Activated CD4-positive, alpha-beta T cell treated with anti-CD3 and anti-CD28 coated beads for 36 hours (primary cell): ENCODE measurements at regions of chr10 and their contacts with region 1.

Region 1: GRCh38 chr10:88810196-88810961 is 7.8 kb downstream of the LIPM start:
- DNase-seq: peak; percentile 40
- ATAC-seq: peak; percentile 86
- H3K4me3 Mint-ChIP-seq: no peak overlapping the region
- H3K27ac Mint-ChIP-seq: no peak overlapping the region
- H3K4me1 Mint-ChIP-seq: peaks cover 15% of the 10 kb centered on the region
- H3K27me3 Mint-ChIP-seq: no peaks in the 10 kb centered on the region

Region 2: GRCh38 chr10:88565072-88565471 is 245.3 kb before region 1 on chr10:
- CTCF ChIA-PET with region 1: interaction called, 7 read pairs
- POLR2A ChIA-PET with region 1: no interaction called
- intact Hi-C with region 1: loop called (anchors 1 kb)
- DNase-seq: no peak
- ATAC-seq: peak; percentile 47
- H3K4me3 Mint-ChIP-seq: no peak overlapping the region
- H3K27ac Mint-ChIP-seq: no peak overlapping the region
- H3K4me1 Mint-ChIP-seq: no peaks in the 10 kb centered on the region
- H3K27me3 Mint-ChIP-seq: no peaks in the 10 kb centered on the region

Region 3: GRCh38 chr10:88582806-88583583 is 227.4 kb before region 1 on chr10 and contains the start of gene RNLS:
- CTCF ChIA-PET with region 1: no interaction called
- POLR2A ChIA-PET with region 1: no interaction called
- intact Hi-C with region 1: loop called (anchors 1 to 5 kb)
- DNase-seq: peak; percentile 80
- ATAC-seq: peak; percentile 91
- H3K4me3 Mint-ChIP-seq: peak within 1 kb of the TSS; percentile 78
- H3K27ac Mint-ChIP-seq: peak within 1 kb of the TSS; percentile 93
- H3K4me1 Mint-ChIP-seq: peaks cover 12% of the 10 kb centered on the region
- H3K27me3 Mint-ChIP-seq: no peaks in the 10 kb centered on the region
- total RNA-seq, gene RNLS: 4.3 to 4.4 TPM

Region 4: DNA sequence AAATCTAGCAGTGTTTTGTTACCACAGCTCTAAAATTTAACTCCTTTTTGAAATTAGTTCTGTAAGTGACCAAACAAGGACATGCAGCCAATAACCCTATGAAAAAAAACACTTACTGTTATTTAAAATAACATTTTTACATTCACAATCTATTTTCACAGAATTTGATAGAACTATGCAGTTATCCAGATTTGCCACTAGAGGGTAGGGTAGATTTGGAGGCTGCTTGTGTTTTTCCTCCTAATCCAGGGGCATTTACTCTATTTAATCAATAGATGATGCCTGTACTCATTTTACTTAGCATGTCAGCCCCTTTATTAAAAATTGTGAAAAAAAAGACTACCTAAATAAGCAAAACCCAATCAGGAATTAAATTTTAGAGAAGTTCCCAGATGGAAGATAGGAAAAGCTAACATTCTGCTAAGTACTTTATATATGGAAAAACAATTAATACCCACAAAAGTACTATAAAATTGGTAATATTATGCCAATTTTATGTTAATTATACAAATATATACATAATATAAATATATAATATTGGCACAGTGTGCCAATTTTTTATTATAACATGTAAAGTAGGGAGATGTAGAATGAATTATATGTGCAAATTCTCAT is 122.4 kb before region 1 on chr10:
- CTCF ChIA-PET with region 1: interaction called, 13 read pairs
- POLR2A ChIA-PET with region 1: no interaction called
- intact Hi-C with region 1: loop called (anchors 1 kb)
- DNase-seq: no peak
- ATAC-seq: no peak
- H3K4me3 Mint-ChIP-seq: no peak overlapping the region
- H3K27ac Mint-ChIP-seq: no peak overlapping the region
- H3K4me1 Mint-ChIP-seq: no peaks in the 10 kb centered on the region
- H3K27me3 Mint-ChIP-seq: peaks cover 8% of the 10 kb centered on the region

Region 5: DNA sequence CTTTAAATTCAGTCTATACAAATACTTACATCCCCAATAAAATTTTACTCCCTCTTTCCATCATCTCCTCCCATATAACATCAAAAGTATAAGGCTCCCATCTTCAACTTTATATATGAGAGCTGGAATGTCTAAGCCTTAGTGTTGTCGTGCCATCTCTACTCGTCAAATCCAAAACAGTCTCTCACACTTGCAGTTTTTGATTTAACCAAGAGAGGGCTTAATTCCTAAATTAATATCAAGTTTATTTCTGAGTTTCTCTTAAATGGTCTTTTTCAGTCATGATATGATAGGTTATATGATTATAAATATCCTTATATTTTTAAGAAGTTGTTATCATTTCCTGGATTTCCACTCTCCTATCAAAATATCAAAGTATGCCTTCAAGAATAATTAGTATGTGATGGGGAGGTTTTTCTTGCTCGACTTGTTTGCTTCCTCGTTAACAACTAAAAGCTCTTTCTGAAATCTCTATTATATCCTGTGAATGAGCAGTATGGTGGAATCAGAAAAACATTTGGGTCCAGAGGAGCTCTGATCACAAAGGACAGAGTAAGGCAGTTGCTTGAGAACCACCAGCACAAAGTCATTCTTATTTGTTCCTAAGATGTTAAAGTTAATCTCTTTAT is 116.9 kb before region 1 on chr10:
- CTCF ChIA-PET with region 1: interaction called, 13 read pairs
- POLR2A ChIA-PET with region 1: no interaction called
- intact Hi-C with region 1: loop called (anchors 1 kb)
- DNase-seq: no peak
- ATAC-seq: no peak
- H3K4me3 Mint-ChIP-seq: no peak overlapping the region
- H3K27ac Mint-ChIP-seq: no peak overlapping the region
- H3K4me1 Mint-ChIP-seq: no peaks in the 10 kb centered on the region
- H3K27me3 Mint-ChIP-seq: peaks cover 7% of the 10 kb centered on the region

Region 6: GRCh38 chr10:88728107-88728763 is 82.1 kb before region 1 on chr10:
- CTCF ChIA-PET with region 1: interaction called, 21 read pairs
- POLR2A ChIA-PET with region 1: no interaction called
- intact Hi-C with region 1: loop called in 1 of 2 experiments (anchors 1 kb)
- DNase-seq: peak; percentile 85
- ATAC-seq: peak; percentile 64
- H3K4me3 Mint-ChIP-seq: no peak overlapping the region
- H3K27ac Mint-ChIP-seq: no peak overlapping the region
- H3K4me1 Mint-ChIP-seq: peaks cover 6% of the 10 kb centered on the region
- H3K27me3 Mint-ChIP-seq: peaks cover 2% of the 10 kb centered on the region